B cell (primary cell): ENCODE measurements at regions of chr21 and their contacts with region 1.

Region 1: DNA sequence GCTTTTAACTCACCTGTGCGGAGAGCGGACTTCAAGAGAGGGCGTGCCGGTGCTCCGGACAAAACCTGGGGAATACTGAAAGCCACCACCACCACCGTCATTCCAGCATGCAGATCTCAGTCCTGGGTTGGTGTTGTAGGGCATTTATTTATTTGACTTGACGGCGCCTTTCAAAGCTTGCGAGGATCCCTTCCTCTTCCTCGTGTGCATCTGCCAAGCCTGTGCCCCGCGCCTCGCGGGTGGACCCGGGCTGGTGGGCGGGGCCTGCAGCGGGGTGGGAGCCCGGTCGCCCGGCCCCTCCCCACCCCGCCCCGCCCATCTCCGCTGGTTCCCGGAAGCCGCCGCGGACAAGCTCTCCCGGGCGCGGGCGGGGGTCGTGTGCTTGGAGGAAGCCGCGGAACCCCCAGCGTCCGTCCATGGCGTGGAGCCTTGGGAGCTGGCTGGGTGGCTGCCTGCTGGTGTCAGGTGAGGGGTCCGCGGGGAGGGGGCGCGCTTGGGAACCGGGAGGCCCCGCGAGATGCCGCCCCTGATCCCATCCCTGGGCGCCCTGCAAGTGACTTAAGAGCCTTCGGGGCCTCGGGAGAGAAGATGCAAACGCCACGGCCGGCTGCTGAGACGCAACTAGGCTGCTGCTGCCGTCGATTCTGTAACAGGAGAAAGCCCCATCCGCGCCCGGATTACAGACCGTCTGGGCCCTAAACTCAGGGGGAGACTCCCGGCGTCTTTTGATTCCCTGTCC is at the start of gene IL10RB:
- DNase-seq: peak; percentile 87
- ATAC-seq: peak; percentile 77
- H3K4me3 ChIP-seq: peak within 1 kb of the TSS; percentile 71 to 94 (median 88)
- H3K4me3 Mint-ChIP-seq: peak within 1 kb of the TSS; percentile 98
- H3K27ac ChIP-seq: peak within 1 kb of the TSS; percentile 82 to 91
- H3K27ac Mint-ChIP-seq: peak within 1 kb of the TSS; percentile 95
- H3K4me1 ChIP-seq: peaks cover 35 to 56% of the 10 kb centered on the region in 2 donors
- H3K4me1 Mint-ChIP-seq: peaks cover 55% of the 10 kb centered on the region
- H3K27me3 ChIP-seq: no peaks in the 10 kb centered on the region
- H3K27me3 Mint-ChIP-seq: no peaks in the 10 kb centered on the region
- CTCF ChIP-seq: no peak
- total RNA-seq, gene IL10RB: 32.5 and 35.5 TPM in 2 replicates

Region 2: DNA sequence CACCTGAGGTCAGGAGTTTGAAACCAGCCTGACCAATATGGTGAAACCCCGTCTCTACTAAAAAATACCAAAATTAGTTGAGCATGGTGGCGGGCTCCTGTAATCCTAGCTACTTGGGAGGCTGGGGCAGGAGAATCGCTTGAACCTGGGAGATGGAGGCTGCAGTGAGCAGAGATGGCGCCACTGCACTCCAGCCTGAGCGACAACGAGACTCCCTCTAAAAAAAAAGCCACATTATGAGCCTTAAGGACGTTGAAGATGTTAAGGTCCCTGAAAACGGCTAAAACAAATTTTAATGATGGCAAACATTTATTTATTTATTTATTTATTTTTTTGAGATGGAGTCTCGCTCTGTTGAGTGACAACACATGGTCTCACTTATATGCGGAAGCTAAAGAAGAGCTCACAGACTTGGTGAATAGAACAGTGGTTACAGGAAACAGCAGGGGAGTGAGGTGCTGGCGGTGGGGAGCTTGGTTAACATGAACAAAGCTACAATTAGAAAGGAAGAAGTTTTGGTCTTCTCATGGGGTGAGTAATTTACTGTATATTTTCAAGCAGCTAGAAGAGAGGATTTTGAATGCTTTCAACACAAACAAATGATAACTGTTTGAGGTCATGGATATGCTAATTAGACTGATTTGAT is 727.9 kb before region 1 on chr21:
- CTCF ChIA-PET with region 1: no interaction called
- POLR2A ChIA-PET with region 1: no interaction called
- intact Hi-C with region 1: no loop called
- DNase-seq: no peak
- ATAC-seq: no peak
- H3K4me3 ChIP-seq: no peak overlapping the region
- H3K4me3 Mint-ChIP-seq: no peak overlapping the region
- H3K27ac ChIP-seq: no peak overlapping the region
- H3K27ac Mint-ChIP-seq: no peak overlapping the region
- H3K4me1 ChIP-seq: no peaks in the 10 kb centered on the region
- H3K4me1 Mint-ChIP-seq: no peaks in the 10 kb centered on the region
- H3K27me3 ChIP-seq: peaks cover 0 to 12% (median 1%) of the 10 kb centered on the region in 4 experiments
- H3K27me3 Mint-ChIP-seq: peaks cover 19% of the 10 kb centered on the region
- CTCF ChIP-seq: no peak

Region 3: DNA sequence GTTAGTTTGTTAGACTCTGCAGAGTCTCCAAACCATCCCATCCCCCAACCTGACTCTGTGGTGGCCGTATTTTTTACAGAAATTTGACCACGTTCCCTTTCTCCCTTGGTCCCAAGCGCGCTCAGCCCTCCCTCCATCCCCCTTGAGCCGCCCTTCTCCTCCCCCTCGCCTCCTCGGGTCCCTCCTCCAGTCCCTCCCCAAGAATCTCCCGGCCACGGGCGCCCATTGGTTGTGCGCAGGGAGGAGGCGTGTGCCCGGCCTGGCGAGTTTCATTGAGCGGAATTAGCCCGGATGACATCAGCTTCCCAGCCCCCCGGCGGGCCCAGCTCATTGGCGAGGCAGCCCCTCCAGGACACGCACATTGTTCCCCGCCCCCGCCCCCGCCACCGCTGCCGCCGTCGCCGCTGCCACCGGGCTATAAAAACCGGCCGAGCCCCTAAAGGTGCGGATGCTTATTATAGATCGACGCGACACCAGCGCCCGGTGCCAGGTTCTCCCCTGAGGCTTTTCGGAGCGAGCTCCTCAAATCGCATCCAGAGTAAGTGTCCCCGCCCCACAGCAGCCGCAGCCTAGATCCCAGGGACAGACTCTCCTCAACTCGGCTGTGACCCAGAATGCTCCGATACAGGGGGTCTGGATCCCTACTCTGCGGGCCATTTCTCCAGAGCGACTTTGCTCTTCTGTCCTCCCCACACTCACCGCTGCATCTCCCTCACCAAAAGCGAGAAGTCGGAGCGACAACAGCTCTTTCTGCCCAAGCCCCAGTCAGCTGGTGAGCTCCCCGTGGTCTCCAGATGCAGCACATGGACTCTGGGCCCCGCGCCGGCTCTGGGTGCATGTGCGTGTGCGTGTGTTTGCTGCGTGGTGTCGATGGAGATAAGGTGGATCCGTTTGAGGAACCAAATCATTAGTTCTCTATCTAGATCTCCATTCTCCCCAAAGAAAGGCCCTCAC is 240.5 kb before region 1 on chr21 and contains the start of gene OLIG2:
- CTCF ChIA-PET with region 1: no interaction called
- POLR2A ChIA-PET with region 1: no interaction called
- intact Hi-C with region 1: no loop called
- DNase-seq: peak; percentile 30
- ATAC-seq: no peak
- H3K4me3 ChIP-seq: no peak within 1 kb of the TSS
- H3K4me3 Mint-ChIP-seq: peak within 1 kb of the TSS; percentile 26
- H3K27ac ChIP-seq: no peak within 1 kb of the TSS
- H3K27ac Mint-ChIP-seq: peak within 1 kb of the TSS; percentile 10
- H3K4me1 ChIP-seq: peaks cover 46 to 54% of the 10 kb centered on the region in 2 donors
- H3K4me1 Mint-ChIP-seq: peaks cover 32% of the 10 kb centered on the region
- H3K27me3 ChIP-seq: peaks cover 0 to 94% (median 60%) of the 10 kb centered on the region in 4 experiments
- H3K27me3 Mint-ChIP-seq: peaks cover 63% of the 10 kb centered on the region
- CTCF ChIP-seq: no peak
- total RNA-seq, gene OLIG2: not detected in 2 replicates

Region 4: GRCh38 chr21:33229784-33230544 is 36.3 kb before region 1 on chr21 and contains the start of gene IFNAR2:
- CTCF ChIA-PET with region 1: no interaction called
- POLR2A ChIA-PET with region 1: no interaction called
- intact Hi-C with region 1: loop called (anchors 1 kb)
- DNase-seq: peak; percentile 85
- ATAC-seq: peak; percentile 90
- H3K4me3 ChIP-seq: peak within 1 kb of the TSS; percentile 66 to 97 (median 93)
- H3K4me3 Mint-ChIP-seq: peak within 1 kb of the TSS; percentile 92
- H3K27ac ChIP-seq: peak within 1 kb of the TSS; percentile 54 to 84
- H3K27ac Mint-ChIP-seq: peak within 1 kb of the TSS; percentile 89
- H3K4me1 ChIP-seq: peaks cover 30 to 37% of the 10 kb centered on the region in 2 donors
- H3K4me1 Mint-ChIP-seq: peaks cover 43% of the 10 kb centered on the region
- H3K27me3 ChIP-seq: no peaks in the 10 kb centered on the region
- H3K27me3 Mint-ChIP-seq: no peaks in the 10 kb centered on the region
- CTCF ChIP-seq: no peak
- total RNA-seq, gene IFNAR2: 45.0 and 52.2 TPM in 2 replicates

Region 5: DNA sequence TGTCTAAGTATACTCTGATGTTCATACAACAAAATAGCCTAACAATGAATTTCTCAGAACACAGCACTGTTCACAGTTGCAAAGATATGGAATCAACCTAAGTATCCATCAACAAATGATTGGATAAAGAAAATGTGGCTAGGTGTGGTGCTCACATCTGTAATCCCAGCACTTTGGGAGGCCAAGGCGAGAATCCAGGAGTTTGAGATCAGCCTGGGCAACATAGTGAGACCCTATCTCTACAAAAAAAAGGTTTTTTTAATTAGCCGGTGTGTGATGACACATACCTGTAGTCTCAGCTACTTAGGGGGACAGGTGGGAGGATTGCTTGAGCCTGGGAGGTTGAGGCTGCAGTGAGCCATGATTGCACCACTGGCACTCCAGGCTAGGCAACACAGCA is 25.8 kb before region 1 on chr21:
- CTCF ChIA-PET with region 1: no interaction called
- POLR2A ChIA-PET with region 1: no interaction called
- intact Hi-C with region 1: no loop called
- DNase-seq: no peak
- ATAC-seq: no peak
- H3K4me3 ChIP-seq: no peak overlapping the region
- H3K4me3 Mint-ChIP-seq: no peak overlapping the region
- H3K27ac ChIP-seq: no peak overlapping the region
- H3K27ac Mint-ChIP-seq: peak overlapping the region; percentile 70
- H3K4me1 ChIP-seq: peaks cover 22 to 38% of the 10 kb centered on the region in 2 donors
- H3K4me1 Mint-ChIP-seq: peaks cover 51% of the 10 kb centered on the region
- H3K27me3 ChIP-seq: no peaks in the 10 kb centered on the region
- H3K27me3 Mint-ChIP-seq: no peaks in the 10 kb centered on the region
- CTCF ChIP-seq: no peak

Region 6: GRCh38 chr21:33296156-33296555 is 29.9 kb after region 1 on chr21:
- CTCF ChIA-PET with region 1: interaction called, 5 read pairs
- POLR2A ChIA-PET with region 1: interaction called, 10 read pairs
- intact Hi-C with region 1: loop called (anchors 1 kb)
- DNase-seq: peak; percentile 84
- ATAC-seq: peak; percentile 83
- H3K4me3 ChIP-seq: no peak overlapping the region
- H3K4me3 Mint-ChIP-seq: peak overlapping the region; percentile 72
- H3K27ac ChIP-seq: peak overlapping the region; percentile 66 to 84
- H3K27ac Mint-ChIP-seq: peak overlapping the region; percentile 94
- H3K4me1 ChIP-seq: peaks cover 49 to 59% of the 10 kb centered on the region in 2 donors
- H3K4me1 Mint-ChIP-seq: peaks cover 51% of the 10 kb centered on the region
- H3K27me3 ChIP-seq: no peaks in the 10 kb centered on the region
- H3K27me3 Mint-ChIP-seq: no peaks in the 10 kb centered on the region
- CTCF ChIP-seq: no peak

Region 7: DNA sequence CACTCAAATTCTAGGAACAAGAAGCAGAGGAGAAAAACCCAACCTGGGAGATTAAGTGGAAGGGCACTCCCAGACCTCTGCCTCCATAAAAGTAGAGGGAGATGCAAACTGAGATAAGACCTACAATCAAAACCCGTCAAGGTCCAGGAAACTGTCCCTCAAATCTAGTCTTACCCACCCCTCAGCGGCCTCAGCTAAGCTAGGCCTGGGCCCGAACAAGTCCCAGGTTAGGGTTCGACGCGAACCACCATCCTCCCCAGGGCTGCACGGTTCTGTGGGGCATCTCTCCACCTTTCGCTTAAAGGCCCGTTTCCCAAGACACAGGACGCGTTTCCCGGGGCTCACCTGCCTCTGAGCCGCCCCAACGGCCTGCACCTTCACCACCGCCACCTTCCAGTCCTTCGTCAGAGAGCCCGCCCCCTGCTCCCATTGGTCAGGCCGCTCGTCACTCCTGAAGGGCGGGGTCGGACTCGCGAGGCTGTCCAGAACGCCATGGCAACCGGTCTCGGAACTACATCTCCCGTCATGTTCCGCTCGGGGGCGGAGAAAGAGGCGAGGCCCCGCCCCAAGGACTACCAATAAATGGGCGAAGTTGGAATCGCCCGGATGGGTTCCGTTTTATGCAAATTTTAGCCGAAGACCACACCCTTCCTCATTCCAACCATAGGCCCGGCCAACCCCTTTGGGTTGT is 375.3 kb after region 1 on chr21 and contains the start of gene CRYZL1:
- CTCF ChIA-PET with region 1: no interaction called
- POLR2A ChIA-PET with region 1: no interaction called
- intact Hi-C with region 1: no loop called
- DNase-seq: peak; percentile 100
- ATAC-seq: peak; percentile 77
- H3K4me3 ChIP-seq: peak within 1 kb of the TSS; percentile 71 to 91 (median 79)
- H3K4me3 Mint-ChIP-seq: peak within 1 kb of the TSS; percentile 94
- H3K27ac ChIP-seq: peak within 1 kb of the TSS; percentile 84 to 90
- H3K27ac Mint-ChIP-seq: peak within 1 kb of the TSS; percentile 97
- H3K4me1 ChIP-seq: peaks cover 16 to 20% of the 10 kb centered on the region in 2 donors
- H3K4me1 Mint-ChIP-seq: peaks cover 27% of the 10 kb centered on the region
- H3K27me3 ChIP-seq: peaks cover 0 to 27% (median 19%) of the 10 kb centered on the region in 4 experiments
- H3K27me3 Mint-ChIP-seq: peaks cover 22% of the 10 kb centered on the region
- CTCF ChIP-seq: no peak
- total RNA-seq, gene CRYZL1: 60.6 and 66.9 TPM in 2 replicates